Activated CD4-positive, alpha-beta T cell treated with anti-CD3 and anti-CD28 coated beads for 36 hours (primary cell): ENCODE measurements at regions of chr6 and their contacts with region 1.

Region 1: DNA sequence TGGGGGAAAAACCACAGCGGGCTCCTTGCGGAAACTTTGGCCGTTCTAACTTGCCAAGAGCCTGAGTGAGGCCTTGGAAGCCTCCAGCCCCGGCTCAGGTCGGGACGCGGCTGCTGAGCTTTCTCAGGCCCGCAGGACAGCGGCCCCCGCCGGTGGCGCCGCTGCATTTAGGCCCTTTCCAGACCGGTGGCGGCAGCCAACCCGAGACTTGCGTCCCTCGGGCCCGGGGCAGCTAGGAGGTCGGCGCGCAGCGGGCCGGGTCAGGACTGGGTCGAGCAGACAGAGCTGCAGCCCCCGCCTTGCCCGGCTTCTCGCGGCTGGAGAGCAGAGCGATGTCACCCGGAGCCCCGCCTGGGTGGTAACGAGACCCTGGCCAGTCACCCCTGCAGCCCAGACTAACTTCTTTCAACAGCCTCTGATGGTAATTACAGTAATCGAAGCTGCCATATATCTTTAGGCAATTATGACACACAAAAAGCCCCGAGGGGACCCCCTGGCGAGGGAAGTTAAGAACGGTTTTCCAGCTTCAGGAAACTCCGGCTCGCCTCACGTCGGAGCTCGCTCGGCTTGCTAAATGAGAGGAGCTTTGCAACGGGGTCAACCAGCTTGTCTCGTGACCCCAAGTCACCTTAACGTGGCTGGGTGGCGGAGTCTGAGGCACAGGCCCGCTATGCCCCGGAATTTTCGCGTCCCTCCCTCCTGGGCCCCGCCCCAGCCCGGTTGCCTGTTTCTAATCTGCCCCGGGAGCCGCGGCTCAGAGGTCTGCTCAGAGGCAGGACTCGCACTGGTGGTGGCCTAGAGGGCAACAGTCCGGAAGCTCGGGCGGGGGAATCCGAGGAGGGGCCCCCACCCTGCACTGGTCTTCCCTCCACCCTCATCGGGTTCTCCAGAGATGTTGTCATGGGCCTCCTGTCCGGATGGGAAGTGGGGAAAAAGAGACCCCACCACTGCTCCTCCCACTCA is 3.0 kb downstream of the NR2E1 start:
- DNase-seq: peak; percentile 46
- ATAC-seq: peak; percentile 54
- H3K4me3 Mint-ChIP-seq: peak overlapping the region; percentile 49
- H3K27ac Mint-ChIP-seq: no peak overlapping the region
- H3K4me1 Mint-ChIP-seq: peaks cover 40% of the 10 kb centered on the region
- H3K27me3 Mint-ChIP-seq: peaks cover 81% of the 10 kb centered on the region

Region 2: GRCh38 chr6:107259951-107260350 is 908.8 kb before region 1 on chr6:
- CTCF ChIA-PET with region 1: no interaction called
- POLR2A ChIA-PET with region 1: no interaction called
- intact Hi-C with region 1: no loop called
- DNase-seq: no peak
- ATAC-seq: no peak
- H3K4me3 Mint-ChIP-seq: no peak overlapping the region
- H3K27ac Mint-ChIP-seq: no peak overlapping the region
- H3K4me1 Mint-ChIP-seq: no peaks in the 10 kb centered on the region
- H3K27me3 Mint-ChIP-seq: no peaks in the 10 kb centered on the region

Region 3: DNA sequence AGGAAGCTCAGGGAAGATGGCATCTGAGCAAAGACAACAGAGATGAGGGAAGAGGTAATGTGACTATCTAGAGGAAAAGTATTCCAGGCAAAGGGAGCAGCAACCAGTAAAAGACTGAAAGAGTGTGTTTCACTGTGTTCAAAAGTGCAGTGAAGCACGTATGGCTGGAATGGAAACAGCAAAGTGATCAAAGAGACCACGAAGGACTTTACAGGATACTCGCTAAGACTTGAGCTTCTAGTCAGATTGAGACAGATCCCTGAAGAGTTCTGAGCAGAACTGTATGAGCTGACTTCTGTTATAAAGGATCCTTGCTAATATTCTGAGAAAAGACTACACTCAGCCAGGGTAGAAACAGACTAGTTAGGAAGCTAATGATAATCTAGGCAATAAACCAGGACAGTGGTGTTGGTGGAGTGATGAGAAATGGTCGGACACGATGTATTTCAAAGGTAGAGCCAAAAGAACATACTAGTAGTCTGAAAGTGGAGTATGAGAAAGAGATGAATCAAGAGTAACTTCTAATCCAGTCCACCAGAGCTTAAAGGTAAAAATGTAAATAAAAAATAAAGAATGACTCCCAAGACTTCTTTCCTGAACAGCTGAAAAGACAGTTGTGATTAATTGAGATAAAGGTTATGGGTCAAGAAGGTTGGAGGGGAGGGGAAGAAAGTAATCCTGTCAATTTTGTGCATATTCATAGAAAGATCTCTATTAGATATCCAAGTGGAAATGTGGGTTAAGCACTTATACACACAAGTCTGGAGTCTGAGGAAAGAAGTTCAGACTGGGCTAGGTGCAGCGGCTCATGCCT is 224.9 kb before region 1 on chr6:
- CTCF ChIA-PET with region 1: no interaction called
- POLR2A ChIA-PET with region 1: no interaction called
- intact Hi-C with region 1: no loop called
- DNase-seq: no peak
- ATAC-seq: peak; percentile 83
- H3K4me3 Mint-ChIP-seq: no peak overlapping the region
- H3K27ac Mint-ChIP-seq: peak overlapping the region; percentile 33
- H3K4me1 Mint-ChIP-seq: peaks cover 53% of the 10 kb centered on the region
- H3K27me3 Mint-ChIP-seq: no peaks in the 10 kb centered on the region

Region 4: GRCh38 chr6:108052706-108053105 is 116.1 kb before region 1 on chr6:
- CTCF ChIA-PET with region 1: no interaction called
- POLR2A ChIA-PET with region 1: no interaction called
- intact Hi-C with region 1: no loop called
- DNase-seq: no peak
- ATAC-seq: no peak
- H3K4me3 Mint-ChIP-seq: no peak overlapping the region
- H3K27ac Mint-ChIP-seq: no peak overlapping the region
- H3K4me1 Mint-ChIP-seq: no peaks in the 10 kb centered on the region
- H3K27me3 Mint-ChIP-seq: no peaks in the 10 kb centered on the region

Region 5: GRCh38 chr6:108157234-108157980 is 11.4 kb before region 1 on chr6:
- CTCF ChIA-PET with region 1: interaction called, 8 read pairs
- POLR2A ChIA-PET with region 1: interaction called, 3 read pairs
- intact Hi-C with region 1: loop called in 1 of 2 experiments (anchors 1 kb)
- DNase-seq: no peak
- ATAC-seq: no peak
- H3K4me3 Mint-ChIP-seq: no peak overlapping the region
- H3K27ac Mint-ChIP-seq: no peak overlapping the region
- H3K4me1 Mint-ChIP-seq: peaks cover 13% of the 10 kb centered on the region
- H3K27me3 Mint-ChIP-seq: peaks cover 69% of the 10 kb centered on the region